ENCODE measurements at regions of chr9 and their contacts with region 1.

Region 1: GRCh38 chr9:30201024-30201423 is 2183.4 kb upstream of the ACO1 start:
- DNase-seq: no peak
- ATAC-seq: no peak
- H3K4me3 ChIP-seq: no peak overlapping the region
- H3K27ac ChIP-seq: no peak overlapping the region
- H3K4me1 ChIP-seq: no peaks in the 10 kb centered on the region
- H3K27me3 ChIP-seq: no peaks in the 10 kb centered on the region
- CTCF ChIP-seq: no peak

Region 2: DNA sequence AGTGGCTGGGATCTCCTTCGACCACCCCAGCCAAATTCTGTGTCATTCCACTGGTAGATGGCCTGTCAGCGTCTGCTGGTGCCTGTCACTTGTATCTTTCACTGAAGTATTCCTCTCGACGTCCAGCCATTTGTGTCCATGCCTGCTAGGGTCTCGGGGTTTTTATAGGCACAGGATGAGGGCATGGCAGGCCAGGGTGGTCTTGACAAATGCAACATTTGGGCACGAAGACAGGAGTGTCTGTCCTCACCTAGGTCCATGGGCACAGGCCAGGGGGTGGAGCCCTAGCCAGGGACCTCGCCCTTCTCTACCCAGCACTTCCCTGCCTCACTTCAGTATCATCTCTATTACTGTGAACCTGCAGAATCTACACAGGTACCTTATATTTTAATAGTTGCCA is 40.5 kb before region 1 on chr9:
- intact Hi-C with region 1: loop called in 1 of 10 experiments (anchors 10 kb)
- DNase-seq: no peak
- ATAC-seq: no peak
- H3K4me3 ChIP-seq: no peak overlapping the region
- H3K27ac ChIP-seq: no peak overlapping the region
- H3K4me1 ChIP-seq: no peaks in the 10 kb centered on the region
- H3K27me3 ChIP-seq: no peaks in the 10 kb centered on the region
- CTCF ChIP-seq: no peak

Region 3: DNA sequence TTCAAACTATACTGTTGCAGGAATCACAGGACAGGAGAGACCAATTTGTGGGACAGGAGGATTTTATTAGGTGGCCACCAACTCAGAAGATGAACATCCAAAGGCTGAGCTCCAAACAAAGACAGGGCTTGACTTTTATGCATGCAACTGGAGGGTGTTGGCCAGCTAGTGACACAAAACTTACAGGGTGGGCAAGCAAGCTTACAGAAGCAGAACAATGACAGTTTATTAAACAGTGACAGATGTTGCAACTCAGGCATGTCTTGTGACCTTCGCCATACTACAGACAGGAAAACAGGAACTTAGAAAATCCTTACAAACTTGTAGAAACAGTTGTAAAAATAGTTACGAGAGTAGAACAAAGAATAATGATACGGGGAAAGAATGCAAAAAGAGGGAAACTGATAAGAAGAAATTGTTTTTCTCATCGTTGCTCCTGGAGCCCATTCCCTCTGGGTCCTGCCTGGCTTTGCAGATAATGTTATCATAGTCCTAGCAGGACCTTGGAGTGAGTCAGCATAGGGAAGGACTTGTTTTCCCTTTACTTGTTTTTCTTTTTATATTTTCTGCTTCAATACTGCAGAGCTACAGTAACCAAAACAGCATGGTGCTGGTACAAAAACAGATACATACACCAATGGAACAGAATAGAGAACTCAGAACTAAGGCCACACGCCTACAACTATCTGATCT is 100.4 kb after region 1 on chr9:
- intact Hi-C with region 1: no loop called
- DNase-seq: no peak
- ATAC-seq: no peak
- H3K4me3 ChIP-seq: no peak overlapping the region
- H3K27ac ChIP-seq: peak overlapping the region in 1 of 10 donors; percentile 84
- H3K4me1 ChIP-seq: no peaks in the 10 kb centered on the region
- H3K27me3 ChIP-seq: no peaks in the 10 kb centered on the region
- CTCF ChIP-seq: no peak

Region 4: DNA sequence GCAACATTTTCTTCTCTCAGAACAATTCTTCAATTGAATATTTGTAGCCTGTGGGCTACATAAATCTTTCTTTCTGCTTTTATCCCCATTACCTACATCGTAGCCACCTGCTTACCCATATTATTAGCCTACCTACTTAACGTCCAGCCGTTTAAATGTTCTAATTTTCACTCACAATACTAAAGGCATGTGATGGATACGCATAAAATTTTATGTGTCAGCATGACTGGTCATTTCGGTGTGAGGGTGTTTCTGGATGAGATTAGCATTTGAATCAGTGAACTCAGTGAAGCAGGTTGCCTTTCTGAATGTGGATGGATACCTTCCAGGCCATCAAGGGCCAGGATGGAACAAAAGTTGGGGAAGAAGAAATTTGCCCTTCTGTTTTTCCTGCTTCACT is 460.9 kb after region 1 on chr9:
- intact Hi-C with region 1: no loop called
- DNase-seq: no peak
- ATAC-seq: no peak
- H3K4me3 ChIP-seq: no peak overlapping the region
- H3K27ac ChIP-seq: no peak overlapping the region
- H3K4me1 ChIP-seq: no peaks in the 10 kb centered on the region
- H3K27me3 ChIP-seq: no peaks in the 10 kb centered on the region
- CTCF ChIP-seq: no peak